PC-3 (cell line): ENCODE measurements at regions of chr17 and their contacts with region 1.

Region 1: GRCh38 chr17:70622368-70623260 is 453.3 kb downstream of the KCNJ2 start:
- DNase-seq: peak; percentile 80
- ATAC-seq: peak; percentile 90
- H3K4me3 ChIP-seq: peak overlapping the region; percentile 4; the same call in 1 of the 2 replicates
- H3K27ac ChIP-seq: no peak overlapping the region
- H3K4me1 ChIP-seq: peaks cover 3% of the 10 kb centered on the region; the same call in 1 of the 2 replicates
- H3K27me3 ChIP-seq: no peaks in the 10 kb centered on the region
- CTCF ChIP-seq: peak; percentile 97

Region 2: DNA sequence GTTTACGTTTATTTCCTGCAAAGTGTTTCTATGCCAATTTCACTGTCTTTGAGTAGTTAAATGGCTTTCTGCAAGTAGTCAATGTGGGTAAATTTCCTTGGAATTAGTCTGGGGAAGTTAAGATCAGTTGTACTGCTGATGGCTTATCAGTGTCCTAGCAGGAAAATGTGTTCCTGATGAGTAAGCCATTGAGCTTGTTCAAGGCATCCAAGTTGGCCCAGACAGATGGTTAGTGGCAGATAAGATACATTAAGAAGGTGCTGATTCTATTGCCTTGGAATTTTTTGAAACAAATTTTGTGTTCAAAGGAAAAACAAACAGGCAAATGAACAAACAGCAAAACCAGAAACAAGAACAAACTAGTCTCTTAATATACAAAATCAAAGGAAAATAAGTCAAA is 949.7 kb before region 1 on chr17:
- CTCF ChIA-PET with region 1: no interaction called
- POLR2A ChIA-PET with region 1: no interaction called
- intact Hi-C with region 1: loop called (anchors 1 kb)
- DNase-seq: peak; percentile 46
- ATAC-seq: peak; percentile 31
- H3K4me3 ChIP-seq: no peak overlapping the region
- H3K27ac ChIP-seq: no peak overlapping the region
- H3K4me1 ChIP-seq: peaks cover 7% of the 10 kb centered on the region
- H3K27me3 ChIP-seq: no peaks in the 10 kb centered on the region
- CTCF ChIP-seq: no peak

Region 3: GRCh38 chr17:69773081-69773480 is 849.5 kb before region 1 on chr17:
- CTCF ChIA-PET with region 1: no interaction called
- POLR2A ChIA-PET with region 1: no interaction called
- intact Hi-C with region 1: loop called (anchors 10 kb)
- DNase-seq: peak; percentile 65
- ATAC-seq: peak; percentile 30; the same call in 1 of the 2 replicates
- H3K4me3 ChIP-seq: no peak overlapping the region
- H3K27ac ChIP-seq: no peak overlapping the region
- H3K4me1 ChIP-seq: peaks cover 30% of the 10 kb centered on the region
- H3K27me3 ChIP-seq: no peaks in the 10 kb centered on the region
- CTCF ChIP-seq: no peak

Region 4: GRCh38 chr17:70184770-70185169 is 437.8 kb before region 1 on chr17:
- CTCF ChIA-PET with region 1: interaction called, 5 read pairs
- POLR2A ChIA-PET with region 1: no interaction called
- intact Hi-C with region 1: loop called (anchors 5 kb)
- DNase-seq: peak; percentile 88
- ATAC-seq: peak; percentile 89
- H3K4me3 ChIP-seq: peak overlapping the region; percentile 36; the same call in 1 of the 2 replicates
- H3K27ac ChIP-seq: no peak overlapping the region
- H3K4me1 ChIP-seq: peaks cover 23% of the 10 kb centered on the region
- H3K27me3 ChIP-seq: no peaks in the 10 kb centered on the region
- CTCF ChIP-seq: no peak

Region 5: GRCh38 chr17:70848785-70849184 is 226.2 kb after region 1 on chr17:
- CTCF ChIA-PET with region 1: no interaction called
- POLR2A ChIA-PET with region 1: no interaction called
- intact Hi-C with region 1: no loop called
- DNase-seq: peak; percentile 74
- ATAC-seq: peak; percentile 94
- H3K4me3 ChIP-seq: no peak overlapping the region
- H3K27ac ChIP-seq: no peak overlapping the region
- H3K4me1 ChIP-seq: peaks cover 12% of the 10 kb centered on the region
- H3K27me3 ChIP-seq: no peaks in the 10 kb centered on the region
- CTCF ChIP-seq: no peak